Spleen (tissue), 13 donors: ENCODE measurements at regions of chr14 and their contacts with region 1.

Region 1: GRCh38 chr14:81324018-81324417 is 76.1 kb downstream of the STON2 start:
- DNase-seq: no peak
- H3K4me3 ChIP-seq: no peak overlapping the region
- H3K27ac ChIP-seq: peak overlapping the region in 2 of 8 donors; percentile 1 to 53
- H3K4me1 ChIP-seq: peaks cover 0 to 10% (median 3%) of the 10 kb centered on the region in 6 donors
- H3K27me3 ChIP-seq: no peaks in the 10 kb centered on the region
- CTCF ChIP-seq: no peak
- POLR2A ChIP-seq: no peak

Region 2: DNA sequence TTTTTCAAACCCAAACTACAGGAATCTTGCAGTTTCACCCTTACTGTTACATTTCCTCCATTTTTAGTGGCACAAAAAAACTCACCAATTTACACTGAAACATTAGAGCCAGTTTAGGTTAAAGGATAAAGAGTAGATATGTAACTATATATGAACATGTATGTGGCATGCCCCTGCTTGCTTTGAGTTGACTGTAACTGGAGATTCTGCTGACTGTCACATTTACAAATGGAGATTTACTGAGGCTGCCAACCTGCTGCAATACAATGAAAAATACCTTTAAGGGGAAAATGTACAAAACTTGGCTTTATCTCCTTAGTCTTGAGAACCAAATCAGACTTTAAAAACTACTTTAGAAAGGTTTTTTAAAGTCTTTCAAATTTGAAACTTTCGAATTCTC is 47.8 kb after region 1 on chr14:
- intact Hi-C with region 1: loop called (anchors 10 kb)
- DNase-seq: no peak
- H3K4me3 ChIP-seq: no peak overlapping the region
- H3K27ac ChIP-seq: no peak overlapping the region
- H3K4me1 ChIP-seq: peaks cover 0 to 6% (median 0%) of the 10 kb centered on the region in 6 donors
- H3K27me3 ChIP-seq: peaks cover 0 to 9% (median 0%) of the 10 kb centered on the region in 7 donors
- CTCF ChIP-seq: no peak
- POLR2A ChIP-seq: no peak